ENCODE measurements at regions of chr15 and their contacts with region 1.

Region 1: DNA sequence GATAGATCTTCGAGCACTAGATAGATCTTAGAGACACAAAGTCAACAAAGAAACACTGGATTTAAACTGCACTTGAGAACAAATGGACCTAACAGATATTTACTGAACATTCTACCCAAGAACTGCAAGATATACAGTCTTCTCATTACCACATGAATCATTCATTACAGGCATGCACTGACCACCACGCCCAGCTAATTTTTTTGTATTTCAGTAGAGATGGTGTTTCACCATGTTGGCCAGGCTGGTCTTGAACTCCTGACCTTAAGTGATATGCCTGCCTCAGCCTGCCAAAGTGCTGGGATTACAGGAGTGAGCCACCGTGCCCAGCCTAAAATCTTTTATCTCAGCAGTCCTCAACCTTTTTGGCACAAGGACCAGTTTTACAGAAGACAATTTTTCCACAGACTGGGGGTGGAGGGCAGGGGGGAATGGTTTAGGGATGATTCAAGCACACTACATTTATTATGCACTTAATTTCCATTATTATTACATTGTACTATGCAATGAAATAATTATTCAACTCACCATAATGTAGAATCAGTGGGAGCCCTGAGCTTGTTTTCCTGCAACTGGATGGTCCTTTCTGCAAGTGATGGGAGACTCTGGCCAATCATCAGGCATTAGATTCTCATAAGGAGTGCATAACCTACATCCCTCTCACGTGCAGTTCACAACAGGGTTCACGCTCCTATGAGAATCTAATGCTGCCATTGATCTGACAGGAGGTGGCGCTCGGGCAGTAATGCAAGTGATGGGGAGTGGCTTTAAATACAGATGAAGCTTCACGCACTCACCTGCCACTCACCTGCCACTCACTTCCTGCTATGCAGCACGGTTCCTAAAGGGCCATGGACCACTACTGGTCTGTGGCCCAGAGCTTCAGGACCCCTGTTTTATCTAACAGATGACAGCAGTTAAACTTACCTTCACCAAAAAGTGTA is 21.7 kb downstream of the CSNK1G1 start:
- DNase-seq: peak; percentile 36 to 70 (median 54)
- H3K4me3 ChIP-seq: no peak overlapping the region
- H3K4me3 Mint-ChIP-seq: peak overlapping the region in 2 of 8 donors; percentile 47 to 62
- H3K27ac ChIP-seq: no peak overlapping the region
- H3K27ac Mint-ChIP-seq: peak overlapping the region; percentile 69 to 92 (median 75)
- H3K4me1 ChIP-seq: peaks cover 32% of the 10 kb centered on the region
- H3K4me1 Mint-ChIP-seq: peaks cover 18 to 32% (median 21%) of the 10 kb centered on the region in 4 donors
- H3K27me3 ChIP-seq: no peaks in the 10 kb centered on the region
- H3K27me3 Mint-ChIP-seq: no peaks in the 10 kb centered on the region

Region 2: DNA sequence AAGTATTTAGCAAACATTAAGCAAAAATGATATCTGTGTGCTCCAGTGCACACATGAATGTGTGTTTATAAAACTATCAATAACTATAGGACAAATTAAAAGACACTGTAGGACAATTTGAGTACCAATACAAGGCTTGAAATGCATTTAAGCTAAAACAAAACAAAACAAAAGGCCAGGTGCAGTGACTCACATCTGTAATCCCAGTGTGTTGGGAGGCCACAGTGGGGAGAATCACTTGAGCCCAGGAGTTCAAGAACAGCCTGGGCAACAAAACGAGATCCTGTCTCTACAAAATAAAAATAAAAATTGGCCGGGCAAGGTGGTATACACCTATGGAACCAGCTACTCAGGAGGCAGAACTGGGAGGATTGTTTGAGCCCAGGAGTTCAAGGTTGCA is 29.0 kb before region 1 on chr15:
- CTCF ChIA-PET with region 1: no interaction called
- POLR2A ChIA-PET with region 1: no interaction called
- intact Hi-C with region 1: no loop called
- DNase-seq: no peak
- H3K4me3 ChIP-seq: no peak overlapping the region
- H3K4me3 Mint-ChIP-seq: no peak overlapping the region
- H3K27ac ChIP-seq: no peak overlapping the region
- H3K27ac Mint-ChIP-seq: peak overlapping the region in 1 of 7 donors; percentile 57
- H3K4me1 ChIP-seq: no peaks in the 10 kb centered on the region
- H3K4me1 Mint-ChIP-seq: peaks cover 5 to 18% (median 10%) of the 10 kb centered on the region in 4 donors
- H3K27me3 ChIP-seq: no peaks in the 10 kb centered on the region
- H3K27me3 Mint-ChIP-seq: no peaks in the 10 kb centered on the region

Region 3: GRCh38 chr15:64381000-64381752 is 46.9 kb after region 1 on chr15 and contains the start of gene PCLAF:
- CTCF ChIA-PET with region 1: interaction called, 3 read pairs
- POLR2A ChIA-PET with region 1: no interaction called
- intact Hi-C with region 1: loop called (anchors 2 kb)
- DNase-seq: peak; percentile 85 to 93 (median 86)
- H3K4me3 ChIP-seq: peak within 1 kb of the TSS; percentile 55 to 62
- H3K4me3 Mint-ChIP-seq: peak within 1 kb of the TSS; percentile 89 to 98 (median 94)
- H3K27ac ChIP-seq: peak within 1 kb of the TSS; percentile 14
- H3K27ac Mint-ChIP-seq: peak within 1 kb of the TSS; percentile 9 to 93 (median 84)
- H3K4me1 ChIP-seq: peaks cover 15% of the 10 kb centered on the region
- H3K4me1 Mint-ChIP-seq: peaks cover 6 to 25% (median 10%) of the 10 kb centered on the region in 4 donors
- H3K27me3 ChIP-seq: no peaks in the 10 kb centered on the region
- H3K27me3 Mint-ChIP-seq: no peaks in the 10 kb centered on the region
- total RNA-seq, gene PCLAF: 0.39 to 1.5 TPM

Region 4: DNA sequence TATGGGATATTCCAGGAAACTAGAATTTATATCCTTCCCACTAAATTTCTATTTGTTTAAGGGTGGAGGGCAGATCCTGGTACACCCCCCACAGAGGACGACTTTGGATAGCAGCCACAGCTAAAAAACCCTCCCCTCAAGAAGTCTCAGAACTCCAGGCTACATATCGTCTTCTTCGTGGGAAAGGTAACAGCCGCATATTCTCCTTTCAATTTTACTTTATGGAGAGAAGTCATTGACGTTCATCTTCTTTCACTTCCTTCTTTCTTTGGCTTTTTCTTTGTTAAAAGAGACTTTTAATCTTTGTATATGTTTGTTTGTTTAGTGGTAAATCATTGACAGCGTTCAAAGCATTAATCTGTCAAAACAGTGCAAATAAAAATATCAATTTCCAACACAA is 89.7 kb after region 1 on chr15:
- CTCF ChIA-PET with region 1: no interaction called
- POLR2A ChIA-PET with region 1: no interaction called
- intact Hi-C with region 1: no loop called
- DNase-seq: no peak
- H3K4me3 ChIP-seq: no peak overlapping the region
- H3K4me3 Mint-ChIP-seq: no peak overlapping the region
- H3K27ac ChIP-seq: no peak overlapping the region
- H3K27ac Mint-ChIP-seq: peak overlapping the region in 1 of 7 donors; percentile 61
- H3K4me1 ChIP-seq: peaks cover 22% of the 10 kb centered on the region
- H3K4me1 Mint-ChIP-seq: peaks cover 12 to 23% (median 18%) of the 10 kb centered on the region in 4 donors
- H3K27me3 ChIP-seq: no peaks in the 10 kb centered on the region
- H3K27me3 Mint-ChIP-seq: no peaks in the 10 kb centered on the region